Activated T-helper 2 cell treated with anti-CD3 and anti-CD28 coated beads, Interferon-gamma antibody, Interleukin-2, Interleukin-4, amounts not matched to agents 10 μg/mL and 5 μg/mL and 100 μg/mL, durations not matched to agents 14 hours and 24 hours and 36 hours (primary cell): ENCODE measurements at regions of chr6 and their contacts with region 1.

Region 1: DNA sequence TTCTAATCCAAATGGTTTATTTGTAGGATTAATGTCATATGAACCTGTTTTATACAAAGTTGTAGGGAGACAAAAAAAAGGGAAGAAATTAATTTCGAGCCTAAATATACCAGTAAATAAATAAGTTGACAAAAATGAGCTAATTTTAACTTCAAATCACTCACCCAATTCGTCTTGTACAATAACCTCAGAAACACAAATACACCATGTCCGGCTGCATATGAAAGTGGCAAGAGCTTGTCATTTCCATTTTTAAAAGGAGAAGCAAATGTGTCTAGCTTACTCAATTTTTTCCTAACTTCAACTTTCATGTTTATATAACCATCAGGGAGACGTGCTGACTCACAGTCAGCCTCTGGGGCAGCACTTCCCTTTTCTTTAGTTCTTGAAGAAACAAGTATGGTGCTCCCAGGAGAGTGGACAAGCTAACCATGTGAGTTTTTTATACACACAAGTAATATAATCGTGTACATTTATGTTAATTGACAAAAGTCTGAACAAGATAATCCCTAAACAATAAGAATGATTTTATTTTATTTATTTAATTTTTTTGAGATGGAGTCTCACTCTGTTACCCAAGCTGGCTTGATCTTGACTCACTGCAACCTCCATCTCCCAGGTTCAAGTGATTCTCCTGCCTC is 55.5 kb upstream of the SGK1 start:
- DNase-seq: no peak
- H3K4me3 Mint-ChIP-seq: no peak overlapping the region
- H3K27ac Mint-ChIP-seq: peak overlapping the region; percentile 51
- H3K4me1 Mint-ChIP-seq: peaks cover 30% of the 10 kb centered on the region
- H3K27me3 Mint-ChIP-seq: no peaks in the 10 kb centered on the region

Region 2: GRCh38 chr6:134352786-134353480 is 20.5 kb before region 1 on chr6:
- intact Hi-C with region 1: loop called (anchors 2 kb)
- DNase-seq: no peak
- H3K4me3 Mint-ChIP-seq: no peak overlapping the region
- H3K27ac Mint-ChIP-seq: peak overlapping the region; percentile 75
- H3K4me1 Mint-ChIP-seq: peaks cover 26% of the 10 kb centered on the region
- H3K27me3 Mint-ChIP-seq: no peaks in the 10 kb centered on the region

Region 3: DNA sequence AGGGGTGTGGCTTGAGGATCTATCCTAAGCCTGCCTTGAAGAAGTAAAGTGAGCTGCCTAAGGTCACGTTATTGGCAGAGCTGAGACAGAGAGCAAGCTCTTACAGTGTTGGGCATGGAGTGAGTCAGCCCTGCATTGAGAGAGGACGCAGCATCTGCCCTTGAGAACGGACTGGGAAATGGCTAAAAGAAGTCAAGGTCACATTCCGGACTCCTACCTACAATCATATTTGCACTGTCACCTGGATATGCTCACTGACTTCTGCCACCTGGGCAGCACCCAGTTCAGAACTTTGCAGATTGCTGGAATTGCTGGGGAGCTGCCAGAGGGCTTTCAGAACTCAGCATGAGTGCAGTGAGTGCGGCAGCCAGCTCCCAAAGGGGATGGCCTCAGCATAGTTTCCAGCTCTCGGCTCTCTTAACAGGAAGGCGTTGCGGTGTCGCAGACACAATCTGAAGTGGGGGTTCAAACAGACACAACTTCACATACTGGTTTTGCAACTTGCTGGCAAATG is 143.8 kb after region 1 on chr6:
- intact Hi-C with region 1: loop called (anchors 10 kb)
- DNase-seq: no peak
- H3K4me3 Mint-ChIP-seq: no peak overlapping the region
- H3K27ac Mint-ChIP-seq: no peak overlapping the region
- H3K4me1 Mint-ChIP-seq: peaks cover 32% of the 10 kb centered on the region
- H3K27me3 Mint-ChIP-seq: no peaks in the 10 kb centered on the region

Region 4: DNA sequence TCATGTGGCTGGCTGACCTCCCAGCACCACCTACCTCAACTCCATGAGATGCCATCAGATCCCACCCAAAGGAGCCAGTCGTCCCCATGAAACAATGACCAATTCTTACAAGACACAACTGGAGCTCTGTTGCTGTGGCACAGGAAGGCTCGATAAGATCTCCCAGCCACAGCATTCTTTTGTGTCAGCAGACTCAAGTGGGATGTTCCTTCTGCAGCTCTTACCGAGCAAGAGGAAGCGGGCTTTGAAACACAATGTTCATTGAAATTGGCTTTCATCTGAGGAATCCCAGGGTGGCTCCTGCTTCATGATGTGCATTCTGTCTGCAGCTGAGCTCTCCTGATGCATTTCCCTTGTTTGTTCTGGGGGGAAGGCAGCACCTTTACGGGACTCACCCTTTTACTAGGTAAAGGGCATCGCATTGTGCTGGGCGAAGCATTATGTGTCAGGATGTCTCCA is 166.5 kb after region 1 on chr6:
- intact Hi-C with region 1: loop called (anchors 10 kb)
- DNase-seq: peak; percentile 19
- H3K4me3 Mint-ChIP-seq: peak overlapping the region; percentile 65
- H3K27ac Mint-ChIP-seq: peak overlapping the region; percentile 23
- H3K4me1 Mint-ChIP-seq: peaks cover 36% of the 10 kb centered on the region
- H3K27me3 Mint-ChIP-seq: no peaks in the 10 kb centered on the region